Activated CD4-positive, alpha-beta T cell treated with anti-CD3 and anti-CD28 coated beads, Interleukin-2, amount 10 ng/mL, durations not matched to agents 24 days and 14 days (primary cell): ENCODE measurements at regions of chr1 and their contacts with region 1.

Region 1: GRCh38 chr1:8477166-8477982 is 159.5 kb downstream of the SLC45A1 start:
- DNase-seq: peak; percentile 68
- H3K4me3 Mint-ChIP-seq: peak overlapping the region; percentile 54
- H3K27ac Mint-ChIP-seq: peak overlapping the region; percentile 71
- H3K4me1 Mint-ChIP-seq: peaks cover 49% of the 10 kb centered on the region
- H3K27me3 Mint-ChIP-seq: no peaks in the 10 kb centered on the region

Region 2: DNA sequence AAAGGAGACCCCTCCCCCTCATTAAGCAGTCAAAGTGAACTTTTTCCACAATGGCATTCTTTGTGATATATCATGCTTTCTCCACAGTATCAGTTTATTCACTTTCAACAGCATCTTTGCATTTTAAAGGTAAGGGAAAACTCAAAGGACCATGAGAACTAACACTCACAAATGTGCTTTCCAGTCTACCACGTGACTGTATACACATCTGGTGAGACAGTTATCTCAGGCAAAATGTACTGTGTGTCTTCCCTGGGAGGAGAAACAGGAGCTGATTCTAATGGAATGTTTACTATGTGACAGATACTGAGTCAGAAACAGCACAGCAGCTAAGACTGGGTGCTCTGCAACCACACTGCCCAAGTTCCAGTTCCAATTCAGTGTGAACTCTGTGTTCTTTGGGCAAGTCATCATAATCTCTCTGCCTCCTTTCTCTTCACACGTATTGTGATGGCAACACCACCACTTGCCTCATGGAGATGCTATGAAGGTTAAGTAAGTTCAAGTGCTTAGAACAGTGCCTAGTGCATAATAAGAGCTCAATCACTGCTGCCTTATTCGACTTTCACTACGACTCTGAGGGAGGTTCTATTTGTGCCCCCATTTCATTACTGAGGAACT is 80.5 kb before region 1 on chr1:
- intact Hi-C with region 1: loop called (anchors 2 kb)
- DNase-seq: peak; percentile 71
- H3K4me3 Mint-ChIP-seq: peak overlapping the region; percentile 32
- H3K27ac Mint-ChIP-seq: peak overlapping the region; percentile 84
- H3K4me1 Mint-ChIP-seq: peaks cover 53% of the 10 kb centered on the region
- H3K27me3 Mint-ChIP-seq: no peaks in the 10 kb centered on the region

Region 3: GRCh38 chr1:8423650-8424538 is 53.5 kb before region 1 on chr1:
- intact Hi-C with region 1: loop called (anchors 1 kb)
- DNase-seq: peak; percentile 83
- H3K4me3 Mint-ChIP-seq: peak overlapping the region; percentile 86
- H3K27ac Mint-ChIP-seq: peak overlapping the region; percentile 90
- H3K4me1 Mint-ChIP-seq: peaks cover 40% of the 10 kb centered on the region
- H3K27me3 Mint-ChIP-seq: no peaks in the 10 kb centered on the region

Region 4: GRCh38 chr1:8497210-8497801 is 19.9 kb after region 1 on chr1:
- intact Hi-C with region 1: loop called (anchors 2 kb)
- DNase-seq: no peak
- H3K4me3 Mint-ChIP-seq: no peak overlapping the region
- H3K27ac Mint-ChIP-seq: peak overlapping the region; percentile 34
- H3K4me1 Mint-ChIP-seq: peaks cover 29% of the 10 kb centered on the region
- H3K27me3 Mint-ChIP-seq: no peaks in the 10 kb centered on the region

Region 5: GRCh38 chr1:8510041-8510823 is 32.9 kb after region 1 on chr1:
- intact Hi-C with region 1: loop called (anchors 1 kb)
- DNase-seq: peak; percentile 85
- H3K4me3 Mint-ChIP-seq: peak overlapping the region; percentile 56
- H3K27ac Mint-ChIP-seq: peak overlapping the region; percentile 89
- H3K4me1 Mint-ChIP-seq: peaks cover 37% of the 10 kb centered on the region
- H3K27me3 Mint-ChIP-seq: no peaks in the 10 kb centered on the region

Region 6: GRCh38 chr1:8554956-8555534 is 77.7 kb after region 1 on chr1:
- intact Hi-C with region 1: loop called (anchors 2 kb)
- DNase-seq: no peak
- H3K4me3 Mint-ChIP-seq: no peak overlapping the region
- H3K27ac Mint-ChIP-seq: peak overlapping the region; percentile 83
- H3K4me1 Mint-ChIP-seq: peaks cover 41% of the 10 kb centered on the region
- H3K27me3 Mint-ChIP-seq: no peaks in the 10 kb centered on the region

Region 7: DNA sequence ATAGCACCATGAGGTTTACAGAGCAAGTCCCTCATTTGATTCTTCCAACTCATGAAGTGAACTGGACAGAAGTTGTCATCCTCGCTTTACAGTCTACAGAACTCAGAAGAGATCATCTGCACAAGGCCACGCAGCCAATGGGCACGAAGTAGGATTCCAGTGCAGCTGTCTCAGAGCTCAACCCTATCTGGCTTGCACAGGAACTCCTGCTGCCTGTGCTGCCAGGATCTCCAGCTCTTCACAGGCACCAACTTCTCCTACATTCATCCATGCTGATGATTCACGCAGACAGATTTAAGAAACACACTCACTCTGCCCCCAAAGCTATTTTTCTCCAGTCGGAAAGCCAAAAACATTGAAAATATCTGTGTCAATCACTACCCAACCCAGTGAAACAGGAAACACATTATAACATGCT is 183.0 kb after region 1 on chr1:
- intact Hi-C with region 1: loop called (anchors 10 kb)
- DNase-seq: no peak
- H3K4me3 Mint-ChIP-seq: no peak overlapping the region
- H3K27ac Mint-ChIP-seq: no peak overlapping the region
- H3K4me1 Mint-ChIP-seq: peaks cover 7% of the 10 kb centered on the region
- H3K27me3 Mint-ChIP-seq: no peaks in the 10 kb centered on the region